ENCODE measurements at regions of chr4 and their contacts with region 1.

Region 1: GRCh38 chr4:18593445-18594002 is 572.0 kb upstream of the LCORL start:
- DNase-seq: no peak
- ATAC-seq: peak; percentile 44

Region 2: DNA sequence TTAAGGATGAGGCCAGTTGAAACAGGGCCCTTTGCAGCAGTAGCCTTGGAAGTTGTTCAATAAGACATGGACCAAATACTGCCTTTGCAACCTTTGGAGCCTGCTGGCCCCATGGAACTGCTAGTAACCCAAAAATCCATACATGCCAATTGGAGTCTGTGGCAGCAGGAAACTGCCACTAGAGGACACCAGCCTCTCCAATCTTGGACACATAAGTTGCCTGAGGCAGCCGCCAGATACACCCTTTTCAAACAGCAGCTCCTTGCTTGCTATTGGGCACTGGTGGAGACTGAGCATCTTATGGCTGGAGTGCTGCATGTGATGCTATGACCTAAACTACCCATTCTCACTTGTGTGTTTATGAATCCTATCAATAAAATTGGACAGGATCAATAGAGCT is 1031.4 kb before region 1 on chr4:
- intact Hi-C with region 1: loop called (anchors 5 kb)
- DNase-seq: no peak
- ATAC-seq: no peak

Region 3: GRCh38 chr4:17817020-17817419 is 776.5 kb before region 1 on chr4:
- intact Hi-C with region 1: loop called (anchors 5 kb)
- DNase-seq: no peak
- ATAC-seq: no peak

Region 4: GRCh38 chr4:18733961-18734360 is 140.4 kb after region 1 on chr4:
- intact Hi-C with region 1: no loop called
- DNase-seq: no peak
- ATAC-seq: no peak